ENCODE measurements at regions of chr13 and their contacts with region 1.

Region 1: GRCh38 chr13:46126552-46127357 is 21.9 kb upstream of the CPB2 start:
- DNase-seq: peak; percentile 78
- ATAC-seq: peak; percentile 77
- H3K4me3 Mint-ChIP-seq: no peak overlapping the region
- H3K27ac Mint-ChIP-seq: peak overlapping the region; percentile 56
- H3K4me1 Mint-ChIP-seq: peaks cover 35% of the 10 kb centered on the region
- H3K27me3 Mint-ChIP-seq: no peaks in the 10 kb centered on the region

Region 2: DNA sequence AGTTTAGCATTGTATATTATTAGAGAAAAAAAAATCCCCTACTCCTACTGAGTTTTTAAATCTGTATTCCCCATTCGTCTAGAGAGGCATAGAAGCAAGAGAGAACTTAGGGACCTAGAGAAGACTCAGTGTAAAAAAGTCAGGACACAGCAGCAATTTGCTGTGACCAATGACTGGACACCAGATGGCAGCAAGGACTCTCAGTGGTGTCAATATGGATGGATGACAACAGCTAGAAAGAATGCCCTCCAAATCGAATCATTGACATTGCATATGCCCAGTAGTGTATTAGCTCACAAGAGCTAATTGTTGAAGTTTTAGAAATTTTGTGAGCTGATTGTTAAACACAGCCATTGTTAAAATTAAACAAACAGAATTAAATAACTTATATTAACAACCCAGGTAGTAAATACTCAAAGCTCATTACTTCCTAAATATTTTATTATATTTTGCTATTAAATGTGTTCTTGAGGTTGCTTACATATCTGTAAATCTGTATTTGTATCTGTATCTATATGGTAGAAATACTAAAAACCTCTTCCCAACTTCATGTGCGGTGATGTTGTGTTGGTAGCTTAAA is 319.1 kb before region 1 on chr13:
- CTCF ChIA-PET with region 1: interaction called, 12 read pairs
- POLR2A ChIA-PET with region 1: no interaction called
- DNase-seq: peak; percentile 41
- ATAC-seq: peak; percentile 36
- H3K4me3 Mint-ChIP-seq: no peak overlapping the region
- H3K27ac Mint-ChIP-seq: no peak overlapping the region
- H3K4me1 Mint-ChIP-seq: peaks cover 5% of the 10 kb centered on the region
- H3K27me3 Mint-ChIP-seq: peaks cover 4% of the 10 kb centered on the region

Region 3: DNA sequence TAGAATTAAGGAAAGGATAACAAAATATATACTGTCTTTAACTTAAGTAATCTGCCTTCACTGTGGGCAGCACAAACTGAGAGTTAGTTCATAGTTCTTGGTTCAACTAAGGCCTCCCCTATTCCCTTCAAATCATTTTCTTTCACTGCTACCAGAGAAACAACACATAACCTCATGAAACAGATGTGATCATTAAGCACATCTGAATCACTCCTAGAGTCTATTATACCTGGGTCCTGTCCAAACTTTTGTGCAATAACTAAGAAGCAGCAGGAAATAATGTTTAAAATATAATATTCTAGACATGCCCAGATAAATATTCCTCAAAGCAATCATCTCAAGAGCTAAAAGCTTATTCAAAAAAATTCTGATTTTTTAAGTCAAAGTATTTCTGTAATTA is 137.1 kb before region 1 on chr13:
- CTCF ChIA-PET with region 1: no interaction called
- POLR2A ChIA-PET with region 1: no interaction called
- DNase-seq: no peak
- ATAC-seq: no peak
- H3K4me3 Mint-ChIP-seq: no peak overlapping the region
- H3K27ac Mint-ChIP-seq: no peak overlapping the region
- H3K4me1 Mint-ChIP-seq: no peaks in the 10 kb centered on the region
- H3K27me3 Mint-ChIP-seq: no peaks in the 10 kb centered on the region

Region 4: GRCh38 chr13:46071590-46072249 is 55.0 kb before region 1 on chr13:
- CTCF ChIA-PET with region 1: no interaction called
- POLR2A ChIA-PET with region 1: no interaction called
- DNase-seq: no peak
- ATAC-seq: no peak
- H3K4me3 Mint-ChIP-seq: no peak overlapping the region
- H3K27ac Mint-ChIP-seq: no peak overlapping the region
- H3K4me1 Mint-ChIP-seq: no peaks in the 10 kb centered on the region
- H3K27me3 Mint-ChIP-seq: peaks cover 4% of the 10 kb centered on the region

Region 5: DNA sequence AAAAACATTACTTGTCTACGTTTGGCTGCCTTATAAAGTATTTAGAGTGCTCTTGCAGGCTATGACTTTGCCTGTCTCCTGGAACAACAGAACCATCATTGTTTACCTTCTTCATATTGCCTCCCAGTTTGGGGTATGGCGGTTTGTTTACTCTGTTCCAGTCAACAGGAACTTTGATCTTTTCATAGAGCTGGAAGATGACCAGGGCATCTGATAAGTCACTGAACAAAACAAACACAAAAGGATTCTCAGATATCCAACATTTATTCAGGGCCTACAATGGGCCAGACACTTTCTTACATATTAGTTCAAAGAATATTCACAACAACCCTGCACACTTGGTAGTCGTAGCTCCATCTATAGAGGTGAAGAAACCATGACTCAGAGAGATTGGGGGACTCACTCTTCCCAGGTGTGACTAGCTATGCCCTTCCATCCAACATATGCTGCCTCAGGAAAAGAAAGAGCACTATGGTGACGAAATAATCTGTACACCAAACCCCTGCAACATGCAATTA is 16.5 kb after region 1 on chr13:
- CTCF ChIA-PET with region 1: interaction called, 32 read pairs
- POLR2A ChIA-PET with region 1: interaction called, 4 read pairs
- DNase-seq: no peak
- ATAC-seq: no peak
- H3K4me3 Mint-ChIP-seq: no peak overlapping the region
- H3K27ac Mint-ChIP-seq: peak overlapping the region; percentile 22
- H3K4me1 Mint-ChIP-seq: peaks cover 8% of the 10 kb centered on the region
- H3K27me3 Mint-ChIP-seq: no peaks in the 10 kb centered on the region

Region 6: DNA sequence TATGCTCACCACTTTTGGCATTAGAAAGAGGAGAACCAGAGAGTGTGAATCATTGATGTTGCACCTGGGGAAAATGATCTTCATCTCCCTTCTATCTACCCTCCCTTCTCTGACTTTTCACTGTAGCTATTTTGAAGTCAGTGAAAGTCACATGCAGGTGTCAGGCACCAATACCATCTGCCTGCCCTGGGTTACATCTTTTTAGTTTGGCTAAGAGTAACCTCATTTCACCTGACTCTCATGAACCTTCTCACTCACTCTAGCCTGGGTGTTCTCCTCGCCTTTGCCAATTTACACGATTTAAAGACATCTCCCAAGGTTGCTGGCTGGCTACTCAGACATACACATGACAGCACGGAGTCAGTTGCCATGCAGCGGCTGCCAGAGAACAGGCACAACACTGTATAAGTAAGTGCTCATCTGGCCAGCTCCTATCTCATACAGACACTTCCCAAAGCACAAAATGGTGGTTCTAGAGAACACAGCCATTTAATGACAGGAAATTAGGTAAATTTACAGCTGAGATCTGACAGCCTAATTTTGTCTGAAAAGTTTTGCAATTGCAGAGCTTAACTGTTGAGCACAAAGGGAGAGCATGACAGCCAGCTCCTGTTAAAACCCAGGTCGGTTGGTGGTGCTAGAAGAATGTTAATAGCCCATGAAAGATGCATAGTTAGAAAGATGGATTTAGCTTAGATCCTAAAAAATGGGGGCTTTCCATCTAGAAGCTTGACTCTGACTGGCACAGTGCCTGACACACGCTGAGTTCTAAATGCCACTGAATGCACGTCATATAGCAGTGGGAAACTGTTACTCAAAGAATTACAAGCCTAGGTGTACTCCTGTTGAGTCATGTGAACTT is 22.7 kb after region 1 on chr13:
- CTCF ChIA-PET with region 1: interaction called, 32 read pairs
- POLR2A ChIA-PET with region 1: interaction called, 4 read pairs
- DNase-seq: no peak
- ATAC-seq: peak; percentile 23
- H3K4me3 Mint-ChIP-seq: no peak overlapping the region
- H3K27ac Mint-ChIP-seq: peak overlapping the region; percentile 75
- H3K4me1 Mint-ChIP-seq: peaks cover 29% of the 10 kb centered on the region
- H3K27me3 Mint-ChIP-seq: no peaks in the 10 kb centered on the region

Region 7: DNA sequence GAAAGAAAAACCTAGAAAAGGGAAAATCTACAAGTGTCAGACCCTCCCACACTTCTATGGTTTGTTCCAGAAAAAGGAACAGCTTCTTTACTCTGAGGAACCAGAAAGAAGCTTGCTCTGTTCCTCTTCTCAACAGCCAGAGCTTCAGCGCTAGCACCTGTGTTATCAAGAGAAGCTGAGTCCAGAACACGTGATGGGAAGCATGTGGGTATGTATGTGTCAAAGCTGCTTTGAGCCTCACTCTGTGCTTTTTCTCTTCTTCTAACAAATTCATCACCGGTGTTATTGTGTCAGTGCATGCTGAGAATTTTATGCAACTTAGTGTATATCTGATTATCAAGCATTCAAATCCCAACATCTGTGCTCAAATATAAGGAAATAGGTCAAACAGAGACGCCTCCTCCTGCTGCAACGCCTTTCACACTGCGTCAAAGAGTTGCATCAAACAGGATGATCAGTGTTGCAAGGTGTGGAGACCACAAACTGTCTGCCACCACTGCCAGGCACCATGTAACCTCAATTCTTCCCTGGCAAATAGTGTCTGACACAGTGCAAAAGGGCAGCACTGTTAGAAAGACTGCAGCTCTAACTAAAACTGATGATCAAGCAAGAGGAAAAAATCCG is 168.8 kb after region 1 on chr13:
- CTCF ChIA-PET with region 1: interaction called, 11 read pairs
- POLR2A ChIA-PET with region 1: interaction called, 3 read pairs
- DNase-seq: peak; percentile 83
- ATAC-seq: peak; percentile 92
- H3K4me3 Mint-ChIP-seq: peak overlapping the region; percentile 68
- H3K27ac Mint-ChIP-seq: peak overlapping the region; percentile 98
- H3K4me1 Mint-ChIP-seq: peaks cover 46% of the 10 kb centered on the region
- H3K27me3 Mint-ChIP-seq: no peaks in the 10 kb centered on the region